Activated CD8-positive, alpha-beta T cell treated with anti-CD3 and anti-CD28 coated beads for 36 hours (primary cell): ENCODE measurements at regions of chr9 and their contacts with region 1.

Region 1: GRCh38 chr9:72271613-72272478 is 93.2 kb downstream of the ZFAND5 start:
- DNase-seq: peak; percentile 67
- ATAC-seq: peak; percentile 65
- H3K4me3 Mint-ChIP-seq: no peak overlapping the region
- H3K27ac Mint-ChIP-seq: no peak overlapping the region
- H3K4me1 Mint-ChIP-seq: no peaks in the 10 kb centered on the region
- H3K27me3 Mint-ChIP-seq: no peaks in the 10 kb centered on the region
- CTCF ChIP-seq: peak; percentile 85

Region 2: DNA sequence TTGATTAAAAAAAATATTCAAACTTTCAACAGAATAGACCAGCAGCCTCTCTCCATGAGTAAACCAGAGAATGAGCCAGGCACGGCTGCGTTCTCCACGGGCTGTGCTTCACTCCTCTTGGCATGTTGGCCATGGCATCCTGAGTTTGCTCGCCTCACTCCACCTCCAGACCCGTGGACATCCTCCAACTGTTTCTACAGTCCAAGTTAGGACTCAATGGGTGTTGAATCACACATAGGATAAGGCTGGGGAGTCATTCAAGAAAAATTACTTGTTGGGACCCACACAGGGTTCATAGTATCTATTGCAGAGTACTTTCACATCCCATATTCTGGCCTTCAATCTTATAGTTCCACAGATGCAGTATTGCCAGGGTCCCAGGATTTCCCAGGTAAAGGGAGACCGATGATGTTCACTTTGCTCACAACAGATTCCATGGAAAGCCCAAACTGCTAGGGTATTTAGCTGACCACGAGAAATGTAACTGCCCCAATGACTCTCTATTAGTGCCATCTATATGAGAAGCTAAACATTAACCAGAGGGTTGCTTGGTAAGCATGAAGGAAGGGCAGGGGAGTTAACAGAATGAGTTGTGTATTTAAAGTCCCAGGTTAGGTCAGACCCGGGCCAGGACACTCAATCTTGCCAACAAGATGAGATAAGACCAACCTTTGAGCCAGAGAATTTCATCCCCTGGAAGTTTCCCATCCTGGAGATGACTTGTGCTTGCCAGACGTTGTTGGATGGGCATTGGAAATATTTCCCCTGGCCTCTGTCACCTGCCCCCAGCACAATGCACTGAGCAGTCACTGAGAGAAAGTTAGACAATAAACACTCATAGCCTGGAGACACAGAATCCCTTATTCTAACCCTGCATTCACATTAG is 142.3 kb before region 1 on chr9:
- CTCF ChIA-PET with region 1: no interaction called
- POLR2A ChIA-PET with region 1: no interaction called
- intact Hi-C with region 1: no loop called
- DNase-seq: no peak
- ATAC-seq: no peak
- H3K4me3 Mint-ChIP-seq: no peak overlapping the region
- H3K27ac Mint-ChIP-seq: no peak overlapping the region
- H3K4me1 Mint-ChIP-seq: no peaks in the 10 kb centered on the region
- H3K27me3 Mint-ChIP-seq: peaks cover 8% of the 10 kb centered on the region
- CTCF ChIP-seq: no peak

Region 3: GRCh38 chr9:72203205-72203803 is 68.5 kb before region 1 on chr9:
- CTCF ChIA-PET with region 1: interaction called, 13 read pairs
- POLR2A ChIA-PET with region 1: no interaction called
- intact Hi-C with region 1: no loop called
- DNase-seq: peak; percentile 10
- ATAC-seq: no peak
- H3K4me3 Mint-ChIP-seq: no peak overlapping the region
- H3K27ac Mint-ChIP-seq: no peak overlapping the region
- H3K4me1 Mint-ChIP-seq: no peaks in the 10 kb centered on the region
- H3K27me3 Mint-ChIP-seq: peaks cover 10% of the 10 kb centered on the region
- CTCF ChIP-seq: peak; percentile 32

Region 4: DNA sequence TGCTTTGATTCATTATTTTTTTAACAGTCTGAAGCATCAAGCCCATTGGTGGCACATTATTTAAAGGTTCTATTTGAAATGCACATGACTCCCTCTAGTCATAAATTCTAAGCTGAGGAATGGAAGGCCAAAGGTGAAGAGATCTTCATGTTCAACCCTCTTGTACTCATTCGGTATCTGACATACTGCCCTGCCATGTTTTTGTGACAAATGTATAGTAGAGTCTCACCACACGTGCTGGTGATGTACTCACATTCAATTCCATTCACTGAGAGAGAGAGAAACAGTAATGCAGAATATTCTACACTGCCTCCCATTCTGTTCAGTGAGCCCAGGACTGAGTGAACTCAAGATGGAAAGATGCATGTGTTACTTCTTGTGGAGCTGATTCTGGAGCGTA is 24.3 kb before region 1 on chr9:
- CTCF ChIA-PET with region 1: interaction called, 10 read pairs
- POLR2A ChIA-PET with region 1: interaction called, 4 read pairs
- intact Hi-C with region 1: no loop called
- DNase-seq: no peak
- ATAC-seq: no peak
- H3K4me3 Mint-ChIP-seq: no peak overlapping the region
- H3K27ac Mint-ChIP-seq: no peak overlapping the region
- H3K4me1 Mint-ChIP-seq: no peaks in the 10 kb centered on the region
- H3K27me3 Mint-ChIP-seq: peaks cover 7% of the 10 kb centered on the region
- CTCF ChIP-seq: no peak

Region 5: DNA sequence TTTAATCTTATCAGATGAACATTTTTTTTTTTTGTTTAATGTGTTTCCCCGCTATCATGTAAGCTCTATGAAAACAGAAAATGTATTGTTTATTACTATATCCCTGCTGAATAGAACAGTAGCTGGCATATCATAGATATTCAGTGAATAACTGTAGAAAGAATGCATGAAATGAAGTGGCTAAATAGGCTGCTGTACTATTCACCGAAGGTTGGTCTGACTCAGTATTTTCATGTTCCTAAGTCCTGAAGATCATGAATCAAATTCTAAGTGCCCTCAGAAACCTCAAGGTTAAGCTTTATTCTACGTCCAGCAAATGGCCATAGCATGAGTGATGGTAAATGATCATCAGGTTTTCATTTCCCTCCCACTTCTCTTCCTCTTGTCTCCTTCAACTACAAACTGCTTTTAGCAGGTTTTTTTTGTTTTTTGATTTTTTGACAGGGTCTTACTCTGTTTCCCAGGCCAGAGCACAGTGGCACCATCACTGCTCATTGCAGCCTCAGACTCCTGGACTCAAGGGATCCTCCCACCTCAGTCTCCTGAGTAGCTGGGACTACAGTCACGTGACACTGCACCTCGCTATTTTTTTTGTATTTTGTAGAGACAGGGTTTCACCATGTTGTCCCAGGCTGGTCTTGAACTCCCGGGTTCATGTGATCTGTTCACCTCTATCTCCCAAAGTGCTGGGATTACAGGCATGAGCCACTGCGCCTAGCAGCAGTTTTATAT is 112.3 kb after region 1 on chr9:
- CTCF ChIA-PET with region 1: no interaction called
- POLR2A ChIA-PET with region 1: no interaction called
- intact Hi-C with region 1: no loop called
- DNase-seq: no peak
- ATAC-seq: no peak
- H3K4me3 Mint-ChIP-seq: no peak overlapping the region
- H3K27ac Mint-ChIP-seq: no peak overlapping the region
- H3K4me1 Mint-ChIP-seq: peaks cover 6% of the 10 kb centered on the region
- H3K27me3 Mint-ChIP-seq: no peaks in the 10 kb centered on the region
- CTCF ChIP-seq: no peak